ENCODE measurements at regions of chr13 and their contacts with region 1.

Region 1: GRCh38 chr13:21435710-21436151 is 23.4 kb downstream of the ZDHHC20 start:
- DNase-seq: peak; percentile 36
- ATAC-seq: peak; percentile 99
- H3K4me3 Mint-ChIP-seq: peak overlapping the region; percentile 67
- H3K27ac Mint-ChIP-seq: peak overlapping the region; percentile 93
- H3K4me1 Mint-ChIP-seq: peaks cover 48% of the 10 kb centered on the region
- H3K27me3 Mint-ChIP-seq: no peaks in the 10 kb centered on the region
- CTCF ChIP-seq: no peak

Region 2: DNA sequence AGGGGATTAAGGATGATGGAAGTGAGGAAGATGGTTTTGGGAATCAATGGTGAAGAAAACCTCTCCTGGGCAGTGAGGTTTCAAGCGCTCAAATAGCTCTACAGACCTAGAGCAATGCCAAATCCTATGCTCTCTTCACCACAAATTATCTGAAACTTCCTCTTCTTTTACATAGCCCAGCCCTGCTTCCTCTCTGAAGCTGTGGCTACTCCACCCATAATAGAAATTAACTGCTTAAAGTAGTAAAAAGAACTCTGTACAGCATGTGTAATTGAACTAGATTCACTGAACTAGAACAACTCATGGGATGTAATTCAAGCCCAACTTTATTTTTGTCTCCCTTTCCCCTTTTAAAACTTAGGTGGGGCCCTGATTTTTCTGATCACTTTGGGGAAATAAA is 889.2 kb before region 1 on chr13:
- CTCF ChIA-PET with region 1: no interaction called
- POLR2A ChIA-PET with region 1: no interaction called
- intact Hi-C with region 1: loop called (anchors 10 kb)
- DNase-seq: no peak
- ATAC-seq: peak; percentile 63
- H3K4me3 Mint-ChIP-seq: peak overlapping the region; percentile 29
- H3K27ac Mint-ChIP-seq: peak overlapping the region; percentile 48
- H3K4me1 Mint-ChIP-seq: peaks cover 47% of the 10 kb centered on the region
- H3K27me3 Mint-ChIP-seq: no peaks in the 10 kb centered on the region
- CTCF ChIP-seq: no peak

Region 3: GRCh38 chr13:20773194-20774080 is 662.3 kb before region 1 on chr13 and contains the start of gene EEF1AKMT1:
- CTCF ChIA-PET with region 1: no interaction called
- POLR2A ChIA-PET with region 1: no interaction called
- intact Hi-C with region 1: loop called (anchors 5 kb)
- DNase-seq: peak; percentile 94
- ATAC-seq: peak; percentile 95
- H3K4me3 Mint-ChIP-seq: peak within 1 kb of the TSS; percentile 98
- H3K27ac Mint-ChIP-seq: peak within 1 kb of the TSS; percentile 99
- H3K4me1 Mint-ChIP-seq: peaks cover 21% of the 10 kb centered on the region
- H3K27me3 Mint-ChIP-seq: no peaks in the 10 kb centered on the region
- CTCF ChIP-seq: no peak
- total RNA-seq, gene EEF1AKMT1: 3.9 and 7.4 TPM in 2 replicates

Region 4: DNA sequence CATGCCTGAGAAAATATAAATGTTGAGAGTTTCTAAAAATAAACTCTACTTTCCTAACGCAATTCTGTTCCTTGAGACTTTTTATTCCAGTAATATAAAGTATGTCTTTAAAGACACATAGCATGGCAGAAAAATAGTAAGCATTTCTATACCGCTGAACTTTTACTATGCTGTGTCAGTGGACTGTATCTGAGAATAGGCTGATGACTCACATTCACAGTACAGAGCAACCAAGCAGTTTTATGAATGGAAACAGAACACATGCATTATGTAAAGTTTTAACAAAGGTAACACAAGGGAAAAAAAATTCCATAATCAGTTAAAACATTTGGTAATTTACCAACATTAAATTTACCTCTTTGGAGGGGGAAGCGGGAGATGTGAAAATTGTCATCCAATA is 15.0 kb before region 1 on chr13:
- CTCF ChIA-PET with region 1: no interaction called
- POLR2A ChIA-PET with region 1: interaction called, 3 read pairs
- intact Hi-C with region 1: loop called (anchors 2 kb)
- DNase-seq: no peak
- ATAC-seq: no peak
- H3K4me3 Mint-ChIP-seq: no peak overlapping the region
- H3K27ac Mint-ChIP-seq: no peak overlapping the region
- H3K4me1 Mint-ChIP-seq: peaks cover 2% of the 10 kb centered on the region
- H3K27me3 Mint-ChIP-seq: no peaks in the 10 kb centered on the region
- CTCF ChIP-seq: no peak

Region 5: DNA sequence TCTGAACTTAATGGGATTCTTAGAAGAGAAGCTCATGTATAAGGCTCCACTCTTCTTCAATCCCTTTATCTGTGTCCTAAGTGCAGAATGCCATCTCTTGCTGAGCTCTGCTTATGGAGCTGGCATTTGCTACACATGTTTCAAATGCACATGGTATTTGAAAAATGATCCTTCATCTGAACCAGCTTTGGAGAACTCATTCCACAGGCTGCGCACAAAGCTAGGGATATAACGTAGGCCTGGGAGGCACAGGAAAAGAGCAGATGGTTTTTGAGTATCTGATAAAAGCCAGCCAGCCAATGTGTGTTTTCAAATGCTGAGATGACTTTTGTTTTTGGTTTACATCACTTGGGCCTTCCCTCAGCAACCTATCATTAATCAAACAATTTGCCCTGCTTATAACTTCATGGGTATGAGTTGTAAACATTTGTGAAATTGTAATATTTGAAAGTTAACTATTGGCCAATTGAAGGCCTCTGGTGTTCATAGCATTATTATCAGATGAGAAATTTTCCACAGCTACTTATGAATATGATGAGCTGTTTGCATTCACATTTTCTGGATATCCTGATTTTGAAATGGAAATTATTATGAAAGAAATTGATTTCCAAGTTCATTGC is 964.2 kb after region 1 on chr13:
- CTCF ChIA-PET with region 1: no interaction called
- POLR2A ChIA-PET with region 1: no interaction called
- intact Hi-C with region 1: no loop called
- DNase-seq: no peak
- ATAC-seq: no peak
- H3K4me3 Mint-ChIP-seq: no peak overlapping the region
- H3K27ac Mint-ChIP-seq: no peak overlapping the region
- H3K4me1 Mint-ChIP-seq: no peaks in the 10 kb centered on the region
- H3K27me3 Mint-ChIP-seq: no peaks in the 10 kb centered on the region
- CTCF ChIP-seq: no peak

Measured in activated B cell treated with CpG ODN at 0.5 μM for 24 hours (primary cell).